Gastrocnemius medialis (tissue), 4 donors: ENCODE measurements at regions of chr4 and their contacts with region 1.

Region 1: GRCh38 chr4:98928505-98929340 is at the start of gene EIF4E:
- DNase-seq: peak; percentile 97 to 99
- ATAC-seq: peak; percentile 85 to 87
- H3K4me3 ChIP-seq: peak within 1 kb of the TSS; percentile 86 to 99 (median 93)
- H3K27ac ChIP-seq: peak within 1 kb of the TSS; percentile 98 to 100 (median 98)
- H3K4me1 ChIP-seq: peaks cover 19 to 32% of the 10 kb centered on the region in 2 donors
- H3K27me3 ChIP-seq: no peaks in the 10 kb centered on the region
- CTCF ChIP-seq: peak in 2 of 5 experiments; percentile 7 to 30
- POLR2A ChIP-seq: peak; percentile 70 to 74
- total RNA-seq, gene EIF4E: 35.7 to 67.5 (median 56.0) TPM

Region 2: DNA sequence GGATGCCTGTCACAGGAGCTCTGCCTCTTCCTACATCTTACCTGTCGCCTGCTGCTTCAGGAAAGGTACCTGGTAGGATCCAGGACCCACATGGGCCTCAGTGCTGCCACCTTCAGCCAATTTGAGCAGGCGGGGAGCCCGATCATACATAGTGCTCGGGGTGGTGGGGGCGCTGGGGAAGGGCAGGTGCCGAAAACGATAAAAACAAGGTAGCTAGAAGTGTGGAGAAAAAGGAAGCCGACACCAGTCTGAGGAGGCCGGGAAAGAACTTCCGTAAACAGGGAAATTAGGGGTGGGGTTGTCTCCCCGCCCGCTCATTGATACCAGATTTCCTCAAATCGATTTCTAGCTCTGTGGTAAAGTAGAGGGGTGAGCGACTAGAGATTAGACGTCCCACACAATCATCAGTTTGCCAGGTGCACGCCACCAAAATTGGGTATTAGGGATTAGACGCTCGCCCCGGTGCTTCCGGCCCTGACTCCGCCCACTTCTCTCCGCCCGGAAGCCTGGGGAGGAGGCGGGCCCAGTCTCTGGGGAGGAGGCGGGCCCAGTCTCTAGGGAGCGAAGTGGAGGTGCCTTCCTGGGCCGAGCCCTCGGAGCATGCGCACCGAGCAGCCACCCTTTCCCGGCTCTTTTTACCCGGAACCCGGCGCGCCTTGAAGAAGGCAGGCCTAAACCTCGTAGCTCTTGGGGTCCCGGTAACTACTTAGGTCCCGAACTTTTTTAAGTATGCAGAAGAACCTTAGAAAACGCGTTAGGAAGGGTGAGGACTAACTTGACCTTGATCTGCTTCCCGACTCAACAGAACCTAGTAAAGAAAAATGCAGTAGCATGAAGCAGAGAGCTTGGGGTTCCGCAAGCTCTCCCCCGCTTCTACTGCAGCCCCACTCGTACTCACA is 785.5 kb before region 1 on chr4 and contains the start of gene STPG2:
- in situ Hi-C with region 1: no loop called
- intact Hi-C with region 1: loop called (anchors 5 kb)
- DNase-seq: peak; percentile 84 to 87
- ATAC-seq: peak; percentile 97 to 99
- H3K4me3 ChIP-seq: peak within 1 kb of the TSS; percentile 58 to 73 (median 71)
- H3K27ac ChIP-seq: peak within 1 kb of the TSS; percentile 77 to 85 (median 78)
- H3K4me1 ChIP-seq: peaks cover 0 to 11% of the 10 kb centered on the region in 2 donors
- H3K27me3 ChIP-seq: peaks cover 0 to 3% (median 0%) of the 10 kb centered on the region in 3 donors
- CTCF ChIP-seq: peak in 2 of 5 experiments; percentile 39 to 47
- POLR2A ChIP-seq: peak; percentile 14 to 37
- total RNA-seq, gene STPG2: 0.42 TPM in 1 of 4 donors, not detected in the others

Region 3: DNA sequence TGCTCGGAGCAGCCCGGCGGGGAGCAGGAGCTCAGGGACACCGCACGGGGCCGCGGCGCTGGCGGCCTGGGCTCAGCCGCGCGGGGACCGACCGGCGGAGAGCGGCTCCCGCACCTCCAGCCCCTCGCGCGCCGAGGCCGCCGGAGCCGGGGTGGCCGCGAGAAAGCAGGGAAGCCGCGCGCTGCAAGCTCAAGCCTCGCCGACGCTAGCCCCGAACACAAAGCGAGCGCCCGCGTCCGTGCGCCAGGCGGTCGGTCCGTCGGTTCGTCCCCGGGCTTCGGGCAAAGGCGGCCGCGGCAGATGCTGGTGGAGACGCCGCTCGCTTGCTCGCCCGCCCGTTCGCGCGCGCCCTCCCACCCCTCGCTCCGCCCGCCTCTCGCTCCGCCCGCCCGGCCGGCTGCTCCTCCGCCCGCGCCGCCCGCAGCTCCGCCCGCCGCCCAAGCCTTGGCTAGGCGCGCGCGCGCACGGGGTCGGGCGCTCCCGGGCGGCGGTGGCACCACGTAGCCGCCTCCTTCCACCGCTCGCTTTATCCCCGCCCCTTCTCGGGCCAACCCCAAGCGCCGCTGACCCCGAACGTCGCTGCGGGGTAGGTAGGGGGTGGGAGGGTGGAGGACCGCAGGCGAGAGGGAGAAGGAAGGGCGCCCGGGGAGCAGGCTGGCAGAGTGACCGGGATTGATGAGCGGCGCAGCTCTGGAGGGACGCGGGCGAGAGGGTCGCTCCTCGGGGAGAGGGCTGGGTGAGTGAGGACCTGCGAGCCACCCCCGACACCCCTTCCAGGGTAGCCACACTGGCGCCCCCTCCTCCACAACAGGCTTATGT is 270.2 kb before region 1 on chr4 and contains the start of gene TSPAN5:
- in situ Hi-C with region 1: no loop called
- intact Hi-C with region 1: loop called (anchors 2 kb)
- DNase-seq: peak; percentile 30 to 48
- ATAC-seq: peak; percentile 51 to 55
- H3K4me3 ChIP-seq: peak within 1 kb of the TSS; percentile 57 to 75 (median 69)
- H3K27ac ChIP-seq: peak within 1 kb of the TSS; percentile 74 to 81 (median 78)
- H3K4me1 ChIP-seq: peaks cover 21 to 28% of the 10 kb centered on the region in 2 donors
- H3K27me3 ChIP-seq: peaks cover 0 to 17% (median 0%) of the 10 kb centered on the region in 3 donors
- CTCF ChIP-seq: no peak
- POLR2A ChIP-seq: peak; percentile 54 to 67
- total RNA-seq, gene TSPAN5: 0.55 to 18.7 (median 0.79) TPM

Region 4: GRCh38 chr4:99062120-99062519 is 133.4 kb after region 1 on chr4:
- in situ Hi-C with region 1: loop called in 2 of 4 experiments (anchors 25 kb)
- intact Hi-C with region 1: loop called (anchors 5 kb)
- DNase-seq: peak; percentile 19 to 56
- ATAC-seq: peak; percentile 89 to 93
- H3K4me3 ChIP-seq: no peak overlapping the region
- H3K27ac ChIP-seq: peak overlapping the region; percentile 45 to 81 (median 64)
- H3K4me1 ChIP-seq: peaks cover 7 to 29% of the 10 kb centered on the region in 2 donors
- H3K27me3 ChIP-seq: no peaks in the 10 kb centered on the region
- CTCF ChIP-seq: no peak
- POLR2A ChIP-seq: no peak

Region 5: GRCh38 chr4:99405433-99406115 is 476.9 kb after region 1 on chr4:
- in situ Hi-C with region 1: loop called in 1 of 4 experiments (anchors 25 kb)
- intact Hi-C with region 1: no loop called
- DNase-seq: peak; percentile 37 to 55
- ATAC-seq: peak; percentile 74 to 84
- H3K4me3 ChIP-seq: no peak overlapping the region
- H3K27ac ChIP-seq: peak overlapping the region; percentile 56 to 71 (median 63)
- H3K4me1 ChIP-seq: peaks cover 0 to 23% of the 10 kb centered on the region in 2 donors
- H3K27me3 ChIP-seq: no peaks in the 10 kb centered on the region
- CTCF ChIP-seq: peak; percentile 94 to 96 (median 95)
- POLR2A ChIP-seq: no peak

Region 6: GRCh38 chr4:99949034-99949998 is 1020.6 kb after region 1 on chr4:
- in situ Hi-C with region 1: no loop called
- intact Hi-C with region 1: loop called (anchors 2 kb)
- DNase-seq: peak; percentile 81 to 89
- ATAC-seq: peak; percentile 56 to 67
- H3K4me3 ChIP-seq: peak overlapping the region; percentile 79 to 95 (median 86)
- H3K27ac ChIP-seq: peak overlapping the region; percentile 96 to 98 (median 98)
- H3K4me1 ChIP-seq: peaks cover 30 to 40% of the 10 kb centered on the region in 2 donors
- H3K27me3 ChIP-seq: no peaks in the 10 kb centered on the region
- CTCF ChIP-seq: peak; percentile 73 to 93 (median 80)
- POLR2A ChIP-seq: no peak